MCF 10A (cell line): ENCODE measurements at regions of chrX and their contacts with region 1.

Region 1: GRCh38 chrX:110847334-110847733 is 51.7 kb upstream of the CHRDL1 start:
- DNase-seq: peak; percentile 79
- H3K4me3 Mint-ChIP-seq: no peak overlapping the region
- H3K27ac Mint-ChIP-seq: no peak overlapping the region
- H3K4me1 Mint-ChIP-seq: peaks cover 17% of the 10 kb centered on the region
- H3K27me3 Mint-ChIP-seq: peaks cover 63% of the 10 kb centered on the region
- CTCF ChIP-seq: peak; percentile 48

Region 2: DNA sequence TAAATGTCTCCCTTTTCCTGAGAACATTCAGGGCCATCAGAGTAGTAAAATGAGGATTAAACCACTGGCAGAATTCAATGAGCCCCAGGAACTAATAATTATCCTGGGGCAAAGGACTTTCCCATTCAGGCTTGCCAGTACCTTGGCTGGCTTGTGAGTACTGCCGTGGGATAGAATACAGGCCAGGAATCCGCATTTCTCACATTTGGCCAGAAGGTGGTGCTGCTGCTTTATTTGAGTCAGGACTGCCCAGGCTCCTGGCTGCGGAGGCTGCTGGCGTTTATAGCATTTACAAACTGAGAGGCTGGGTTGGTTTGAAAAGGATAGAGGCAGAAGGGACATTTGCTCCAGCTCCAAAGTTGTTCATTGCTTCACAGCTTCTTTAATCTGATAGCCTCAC is 397.3 kb before region 1 on chrX:
- CTCF ChIA-PET with region 1: interaction called, 28 read pairs
- POLR2A ChIA-PET with region 1: no interaction called
- intact Hi-C with region 1: loop called (anchors 1 kb)
- DNase-seq: peak; percentile 84
- H3K4me3 Mint-ChIP-seq: no peak overlapping the region
- H3K27ac Mint-ChIP-seq: no peak overlapping the region
- H3K4me1 Mint-ChIP-seq: no peaks in the 10 kb centered on the region
- H3K27me3 Mint-ChIP-seq: peaks cover 80% of the 10 kb centered on the region
- CTCF ChIP-seq: peak; percentile 88

Region 3: DNA sequence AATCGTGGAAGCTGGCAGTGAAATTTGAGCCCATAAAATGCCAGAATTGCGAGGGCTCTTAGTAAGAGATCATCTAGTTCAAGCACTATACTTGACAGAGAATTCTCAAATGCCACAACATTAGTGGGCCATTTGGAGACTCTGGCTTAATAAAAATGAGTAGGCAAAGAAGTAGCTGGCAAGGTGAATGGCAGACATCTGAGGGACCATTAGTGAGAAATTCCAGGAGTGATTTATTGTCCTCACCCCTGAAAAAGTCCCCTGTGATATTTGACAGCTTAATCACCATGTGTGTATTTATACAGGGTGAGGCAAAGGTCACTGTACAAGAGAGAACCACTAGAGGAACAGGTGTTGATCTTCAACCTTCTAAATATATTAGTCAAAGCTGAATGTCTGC is 259.2 kb before region 1 on chrX:
- CTCF ChIA-PET with region 1: interaction called, 3 read pairs
- POLR2A ChIA-PET with region 1: no interaction called
- intact Hi-C with region 1: loop called (anchors 5 kb)
- DNase-seq: no peak
- H3K4me3 Mint-ChIP-seq: no peak overlapping the region
- H3K27ac Mint-ChIP-seq: no peak overlapping the region
- H3K4me1 Mint-ChIP-seq: no peaks in the 10 kb centered on the region
- H3K27me3 Mint-ChIP-seq: peaks cover 45% of the 10 kb centered on the region
- CTCF ChIP-seq: no peak

Region 4: DNA sequence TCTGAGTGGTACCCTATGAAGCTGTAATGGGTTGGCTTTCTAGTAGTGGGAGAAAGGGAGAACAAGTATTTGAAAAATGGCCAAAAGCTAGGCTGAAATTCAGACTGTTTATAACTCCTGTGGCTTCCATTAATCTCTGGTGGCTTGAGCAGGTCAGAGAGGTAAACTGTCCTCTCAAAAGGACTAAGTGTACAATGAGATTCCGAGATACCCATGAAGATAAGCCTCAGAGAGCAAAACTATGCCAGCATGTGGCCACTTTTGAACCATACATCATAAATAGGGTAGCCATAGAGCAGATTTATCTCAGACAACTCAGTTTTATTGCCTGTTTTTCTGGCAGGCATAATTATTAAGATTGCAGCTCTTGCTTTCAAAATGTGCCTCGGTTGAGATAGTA is 140.9 kb before region 1 on chrX:
- CTCF ChIA-PET with region 1: interaction called, 6 read pairs
- POLR2A ChIA-PET with region 1: no interaction called
- intact Hi-C with region 1: loop called (anchors 2 kb)
- DNase-seq: no peak
- H3K4me3 Mint-ChIP-seq: no peak overlapping the region
- H3K27ac Mint-ChIP-seq: no peak overlapping the region
- H3K4me1 Mint-ChIP-seq: no peaks in the 10 kb centered on the region
- H3K27me3 Mint-ChIP-seq: peaks cover 61% of the 10 kb centered on the region
- CTCF ChIP-seq: no peak

Region 5: GRCh38 chrX:111035256-111035655 is 187.9 kb after region 1 on chrX:
- CTCF ChIA-PET with region 1: no interaction called
- POLR2A ChIA-PET with region 1: no interaction called
- intact Hi-C with region 1: no loop called
- DNase-seq: no peak
- H3K4me3 Mint-ChIP-seq: no peak overlapping the region
- H3K27ac Mint-ChIP-seq: no peak overlapping the region
- H3K4me1 Mint-ChIP-seq: peaks cover 9% of the 10 kb centered on the region
- H3K27me3 Mint-ChIP-seq: peaks cover 98% of the 10 kb centered on the region
- CTCF ChIP-seq: no peak

Region 6: GRCh38 chrX:111071542-111072277 is 224.4 kb after region 1 on chrX:
- CTCF ChIA-PET with region 1: no interaction called
- POLR2A ChIA-PET with region 1: no interaction called
- intact Hi-C with region 1: no loop called
- DNase-seq: no peak
- H3K4me3 Mint-ChIP-seq: no peak overlapping the region
- H3K27ac Mint-ChIP-seq: no peak overlapping the region
- H3K4me1 Mint-ChIP-seq: no peaks in the 10 kb centered on the region
- H3K27me3 Mint-ChIP-seq: peaks cover 13% of the 10 kb centered on the region
- CTCF ChIP-seq: no peak

Region 7: DNA sequence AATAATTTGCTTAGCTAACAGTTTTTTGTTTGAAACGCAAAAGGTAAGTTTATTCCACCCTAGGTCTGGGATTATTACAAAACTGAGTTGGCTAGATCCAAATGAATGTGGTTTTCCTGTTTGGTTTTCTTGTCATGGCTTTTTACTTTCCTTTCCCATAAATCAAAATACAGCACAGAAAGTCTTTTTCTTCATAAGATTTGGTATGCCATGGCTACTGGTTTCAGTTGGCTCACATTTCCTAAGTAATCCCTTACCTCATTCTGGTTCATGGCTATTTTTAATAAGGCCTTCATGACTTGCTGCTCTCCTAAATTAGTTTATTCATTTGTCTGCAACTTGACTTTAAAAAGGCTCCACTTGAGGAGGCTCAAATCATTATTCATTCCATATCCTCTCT is 235.7 kb after region 1 on chrX:
- CTCF ChIA-PET with region 1: no interaction called
- POLR2A ChIA-PET with region 1: no interaction called
- intact Hi-C with region 1: no loop called
- DNase-seq: peak; percentile 24
- H3K4me3 Mint-ChIP-seq: no peak overlapping the region
- H3K27ac Mint-ChIP-seq: no peak overlapping the region
- H3K4me1 Mint-ChIP-seq: no peaks in the 10 kb centered on the region
- H3K27me3 Mint-ChIP-seq: peaks cover 82% of the 10 kb centered on the region
- CTCF ChIP-seq: no peak

Region 8: DNA sequence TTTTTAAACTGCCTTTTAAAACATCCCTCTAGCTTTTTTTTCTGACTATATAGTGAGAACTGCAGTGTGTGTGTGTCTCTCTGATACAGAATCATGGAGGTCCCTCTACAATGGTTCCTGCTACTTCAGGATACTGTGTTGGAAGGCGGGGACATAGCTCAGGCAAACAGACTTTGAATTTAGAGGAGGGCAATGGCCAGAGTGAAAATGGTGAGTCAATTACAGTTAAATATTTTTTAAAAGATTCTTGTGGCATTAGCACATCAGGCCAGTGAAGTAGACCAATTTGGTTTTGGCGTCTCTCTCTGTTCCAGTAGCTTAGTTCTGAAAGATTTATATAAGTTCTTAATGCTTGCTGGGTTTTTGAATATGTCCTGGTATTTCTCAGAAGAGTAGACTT is 880.8 kb after region 1 on chrX:
- CTCF ChIA-PET with region 1: no interaction called
- POLR2A ChIA-PET with region 1: no interaction called
- intact Hi-C with region 1: no loop called
- DNase-seq: no peak
- H3K4me3 Mint-ChIP-seq: no peak overlapping the region
- H3K27ac Mint-ChIP-seq: no peak overlapping the region
- H3K4me1 Mint-ChIP-seq: no peaks in the 10 kb centered on the region
- H3K27me3 Mint-ChIP-seq: peaks cover 61% of the 10 kb centered on the region
- CTCF ChIP-seq: no peak